ENCODE measurements at regions of chr2 and their contacts with region 1.

Region 1: DNA sequence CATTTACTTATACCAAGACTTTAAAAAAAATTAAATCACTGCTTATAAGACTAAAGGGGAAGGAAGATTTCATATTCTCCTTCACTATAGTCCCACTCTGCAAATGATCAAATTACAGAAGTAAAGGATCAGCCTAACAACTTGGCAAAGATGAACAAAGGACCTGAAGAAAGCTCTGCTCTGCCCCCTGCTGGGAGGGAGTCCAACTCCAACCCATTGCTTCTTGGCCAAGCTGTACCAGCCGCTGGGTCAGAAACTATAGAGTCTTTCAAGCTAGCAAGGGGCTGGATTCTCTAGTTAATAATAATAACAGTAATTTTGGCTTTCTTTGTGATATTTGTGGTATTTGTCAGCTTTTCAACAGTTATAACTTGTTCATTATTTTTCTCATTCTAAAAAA is 927.0 kb upstream of the CRIM1 start:
- DNase-seq: no peak
- ATAC-seq: no peak
- H3K4me3 ChIP-seq: no peak overlapping the region
- H3K27ac ChIP-seq: no peak overlapping the region
- H3K4me1 ChIP-seq: no peaks in the 10 kb centered on the region
- H3K27me3 ChIP-seq: no peaks in the 10 kb centered on the region
- CTCF ChIP-seq: peak; percentile 10

Region 2: DNA sequence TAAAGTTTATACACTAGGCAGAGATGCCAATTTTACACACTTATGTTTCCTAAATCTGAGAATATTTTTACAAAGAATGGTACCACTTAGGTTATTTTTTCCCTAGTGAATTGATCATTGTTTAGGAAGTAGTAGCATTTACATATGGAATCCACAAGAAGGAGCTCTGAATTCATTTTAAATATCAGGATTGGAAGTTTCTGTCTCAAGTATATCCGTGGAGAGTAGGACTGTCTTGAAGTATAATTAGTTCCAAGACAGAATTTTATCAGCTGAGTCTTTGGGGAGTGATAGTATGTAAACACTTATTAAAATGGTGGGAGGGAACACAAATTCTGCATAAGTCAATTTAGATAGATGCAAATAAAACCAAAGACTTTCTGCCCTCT is 1747.2 kb before region 1 on chr2:
- intact Hi-C with region 1: loop called in 1 of 2 experiments (anchors 10 kb)
- DNase-seq: no peak
- ATAC-seq: no peak
- H3K4me3 ChIP-seq: no peak overlapping the region
- H3K27ac ChIP-seq: no peak overlapping the region
- H3K4me1 ChIP-seq: no peaks in the 10 kb centered on the region
- H3K27me3 ChIP-seq: no peaks in the 10 kb centered on the region
- CTCF ChIP-seq: no peak

Region 3: DNA sequence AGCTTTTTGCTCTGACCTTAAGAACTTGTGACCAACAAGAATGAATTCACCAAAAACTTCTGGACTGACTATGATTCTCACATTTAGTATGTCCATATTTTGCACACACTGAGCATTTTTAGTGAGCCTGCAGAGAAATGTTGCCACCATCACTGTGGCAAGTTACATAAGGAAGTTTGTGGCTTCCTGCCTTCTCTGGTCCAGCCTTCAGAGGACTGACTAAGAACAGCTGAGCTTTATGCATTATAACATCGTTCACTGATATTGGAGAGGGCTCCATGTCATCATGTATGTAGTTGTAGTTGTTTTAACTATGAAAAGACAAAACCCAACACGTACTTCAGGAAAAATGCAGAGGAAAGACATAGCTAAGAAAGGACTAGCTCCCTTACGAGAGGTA is 709.1 kb after region 1 on chr2:
- intact Hi-C with region 1: no loop called
- DNase-seq: no peak
- ATAC-seq: no peak
- H3K4me3 ChIP-seq: no peak overlapping the region
- H3K27ac ChIP-seq: no peak overlapping the region
- H3K4me1 ChIP-seq: no peaks in the 10 kb centered on the region
- H3K27me3 ChIP-seq: no peaks in the 10 kb centered on the region
- CTCF ChIP-seq: no peak